ENCODE measurements at regions of chr12 and their contacts with region 1.

Region 1: GRCh38 chr12:92030618-92031017 is 115.0 kb downstream of the BTG1 start:
- DNase-seq: peak in 34 of 35 experiments; percentile 46 to 88 (median 67)
- ATAC-seq: peak; percentile 92
- H3K4me3 ChIP-seq: peak overlapping the region in 1 of 2 donors; percentile 11
- H3K4me3 Mint-ChIP-seq: peak overlapping the region; percentile 58 to 71 (median 66)
- H3K27ac ChIP-seq: peak overlapping the region; percentile 94
- H3K27ac Mint-ChIP-seq: peak overlapping the region; percentile 97 to 98
- H3K4me1 ChIP-seq: peaks cover 60 to 62% of the 10 kb centered on the region in 2 experiments
- H3K4me1 Mint-ChIP-seq: peaks cover 87 to 91% (median 89%) of the 10 kb centered on the region in 3 donors
- H3K27me3 ChIP-seq: no peaks in the 10 kb centered on the region
- H3K27me3 Mint-ChIP-seq: no peaks in the 10 kb centered on the region

Region 2: GRCh38 chr12:92041742-92042141 is 11.1 kb after region 1 on chr12:
- CTCF ChIA-PET with region 1: interaction called in 1 of 2 experiments, 11 read pairs
- POLR2A ChIA-PET with region 1: interaction called, 4 to 11 read pairs
- DNase-seq: peak in 28 of 35 experiments; percentile 4 to 61 (median 25)
- ATAC-seq: peak; percentile 88 to 96 (median 94)
- H3K4me3 ChIP-seq: no peak overlapping the region
- H3K4me3 Mint-ChIP-seq: peak overlapping the region in 2 of 3 donors; percentile 37 to 48
- H3K27ac ChIP-seq: peak overlapping the region; percentile 24
- H3K27ac Mint-ChIP-seq: peak overlapping the region; percentile 90 to 93
- H3K4me1 ChIP-seq: peaks cover 22 to 29% of the 10 kb centered on the region in 2 experiments
- H3K4me1 Mint-ChIP-seq: peaks cover 77 to 81% (median 78%) of the 10 kb centered on the region in 3 donors
- H3K27me3 ChIP-seq: no peaks in the 10 kb centered on the region
- H3K27me3 Mint-ChIP-seq: no peaks in the 10 kb centered on the region

Region 3: GRCh38 chr12:92324849-92325500 is 294.4 kb after region 1 on chr12:
- CTCF ChIA-PET with region 1: no interaction called
- POLR2A ChIA-PET with region 1: no interaction called
- DNase-seq: no peak
- ATAC-seq: peak in 1 of 4 experiments; percentile 36
- H3K4me3 ChIP-seq: no peak overlapping the region
- H3K4me3 Mint-ChIP-seq: no peak overlapping the region
- H3K27ac ChIP-seq: no peak overlapping the region
- H3K27ac Mint-ChIP-seq: no peak overlapping the region
- H3K4me1 ChIP-seq: peaks cover 0 to 8% of the 10 kb centered on the region in 2 experiments
- H3K4me1 Mint-ChIP-seq: peaks cover 35 to 49% (median 47%) of the 10 kb centered on the region in 3 donors
- H3K27me3 ChIP-seq: no peaks in the 10 kb centered on the region
- H3K27me3 Mint-ChIP-seq: no peaks in the 10 kb centered on the region

Region 4: DNA sequence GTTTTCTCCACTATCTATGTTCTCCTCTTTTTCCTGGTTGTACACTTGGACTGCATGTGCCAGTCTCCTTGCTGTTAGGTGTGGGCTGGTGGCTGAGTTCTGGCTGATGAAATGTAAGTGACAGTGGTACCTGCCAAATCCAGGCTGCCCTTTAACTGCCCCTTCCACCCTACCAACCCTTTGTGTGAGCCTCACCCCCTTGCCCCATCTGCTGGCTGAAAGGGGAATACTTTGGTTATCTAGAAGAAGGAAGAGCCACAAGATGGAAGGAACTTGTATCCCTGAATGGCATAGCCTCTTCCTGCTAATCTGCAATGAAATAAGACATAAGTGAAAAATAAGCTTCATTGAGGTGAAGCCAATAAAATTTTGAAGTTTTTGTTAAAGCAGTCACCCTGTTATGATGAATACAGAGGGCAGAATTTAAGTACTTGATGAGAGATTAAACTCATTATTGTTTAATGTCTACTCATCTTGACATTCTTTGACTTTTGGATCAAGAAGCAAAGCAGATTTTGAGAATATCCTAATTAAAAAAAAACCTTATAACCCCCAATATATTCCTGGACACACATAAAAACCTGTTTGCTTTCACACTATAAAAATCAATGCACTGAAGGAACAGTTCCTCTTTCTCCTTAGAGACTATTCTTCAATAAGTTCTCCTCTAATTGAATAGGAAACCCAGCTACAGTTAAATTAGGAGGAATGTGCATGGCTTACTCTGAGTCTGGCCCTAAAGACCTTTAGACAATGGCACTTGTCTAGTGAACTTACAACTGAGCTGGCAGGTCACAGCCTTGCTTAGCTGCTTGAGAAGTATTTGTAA is 377.7 kb after region 1 on chr12:
- CTCF ChIA-PET with region 1: no interaction called
- POLR2A ChIA-PET with region 1: no interaction called
- DNase-seq: peak in 15 of 35 experiments; percentile 24 to 71 (median 34)
- ATAC-seq: no peak
- H3K4me3 ChIP-seq: no peak overlapping the region
- H3K4me3 Mint-ChIP-seq: peak overlapping the region in 1 of 3 donors; percentile 16
- H3K27ac ChIP-seq: no peak overlapping the region
- H3K27ac Mint-ChIP-seq: peak overlapping the region; percentile 24 to 72
- H3K4me1 ChIP-seq: peaks cover 17 to 27% of the 10 kb centered on the region in 2 experiments
- H3K4me1 Mint-ChIP-seq: peaks cover 64 to 69% (median 65%) of the 10 kb centered on the region in 3 donors
- H3K27me3 ChIP-seq: no peaks in the 10 kb centered on the region
- H3K27me3 Mint-ChIP-seq: no peaks in the 10 kb centered on the region

Measured in T-cell (primary cell).